Activated T-helper 2 cell treated with anti-CD3 and anti-CD28 coated beads, Interferon-gamma antibody, Interleukin-2, Interleukin-4, amounts not matched to agents 10 μg/mL and 5 μg/mL and 100 μg/mL, durations not matched to agents 14 hours and 24 hours and 36 hours (primary cell): ENCODE measurements at regions of chr12 and their contacts with region 1.

Region 1: GRCh38 chr12:6944381-6945186 is 762 bp downstream of the C12orf57 start:
- DNase-seq: peak; percentile 84
- H3K4me3 Mint-ChIP-seq: peak overlapping the region; percentile 84
- H3K27ac Mint-ChIP-seq: peak overlapping the region; percentile 99
- H3K4me1 Mint-ChIP-seq: peaks cover 50% of the 10 kb centered on the region
- H3K27me3 Mint-ChIP-seq: no peaks in the 10 kb centered on the region

Region 2: DNA sequence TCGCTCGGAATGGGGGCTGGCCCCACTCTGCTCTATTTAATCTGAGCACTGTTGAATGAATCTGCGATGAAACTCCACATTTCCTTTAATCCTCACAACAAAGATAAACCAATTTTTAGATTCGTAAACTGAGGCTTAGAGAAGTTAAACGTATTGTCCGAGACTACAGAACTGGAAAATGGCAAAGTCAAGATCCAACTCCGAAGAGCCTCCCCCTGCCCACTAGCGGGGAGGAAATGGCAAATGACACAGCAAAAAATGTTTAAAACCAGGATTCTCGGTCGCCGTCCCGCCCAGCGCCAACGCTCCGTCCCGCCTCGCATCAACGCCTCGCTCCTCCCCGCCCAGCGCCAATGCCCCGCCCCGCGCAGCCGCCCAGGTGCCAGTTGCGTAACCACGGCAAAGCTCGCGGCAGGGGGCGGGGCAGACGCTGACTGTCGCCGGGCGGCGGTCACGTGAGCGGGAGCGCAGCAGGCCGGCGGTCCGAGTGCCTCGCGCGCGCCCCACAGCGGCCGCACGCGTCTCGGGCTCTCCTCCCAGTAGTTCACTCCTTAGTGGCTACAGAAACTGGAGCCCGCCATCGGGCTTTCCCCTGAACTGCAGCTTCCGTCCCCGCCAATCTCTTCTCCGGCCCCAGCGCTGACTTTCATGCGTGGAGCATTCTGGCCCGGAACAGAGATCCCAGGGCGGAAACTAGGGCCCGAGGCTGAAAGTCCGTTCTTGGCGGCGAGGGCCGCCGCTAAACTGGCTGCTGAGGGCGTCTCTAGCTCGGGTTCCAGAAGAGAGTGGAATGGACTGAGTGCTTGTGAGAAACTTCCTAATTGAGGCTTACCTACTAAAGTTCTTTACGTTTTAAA is 53.6 kb before region 1 on chr12:
- intact Hi-C with region 1: loop called (anchors 1 kb)
- DNase-seq: peak; percentile 98
- H3K4me3 Mint-ChIP-seq: peak overlapping the region; percentile 80
- H3K27ac Mint-ChIP-seq: peak overlapping the region; percentile 92
- H3K4me1 Mint-ChIP-seq: peaks cover 13% of the 10 kb centered on the region
- H3K27me3 Mint-ChIP-seq: no peaks in the 10 kb centered on the region

Region 3: DNA sequence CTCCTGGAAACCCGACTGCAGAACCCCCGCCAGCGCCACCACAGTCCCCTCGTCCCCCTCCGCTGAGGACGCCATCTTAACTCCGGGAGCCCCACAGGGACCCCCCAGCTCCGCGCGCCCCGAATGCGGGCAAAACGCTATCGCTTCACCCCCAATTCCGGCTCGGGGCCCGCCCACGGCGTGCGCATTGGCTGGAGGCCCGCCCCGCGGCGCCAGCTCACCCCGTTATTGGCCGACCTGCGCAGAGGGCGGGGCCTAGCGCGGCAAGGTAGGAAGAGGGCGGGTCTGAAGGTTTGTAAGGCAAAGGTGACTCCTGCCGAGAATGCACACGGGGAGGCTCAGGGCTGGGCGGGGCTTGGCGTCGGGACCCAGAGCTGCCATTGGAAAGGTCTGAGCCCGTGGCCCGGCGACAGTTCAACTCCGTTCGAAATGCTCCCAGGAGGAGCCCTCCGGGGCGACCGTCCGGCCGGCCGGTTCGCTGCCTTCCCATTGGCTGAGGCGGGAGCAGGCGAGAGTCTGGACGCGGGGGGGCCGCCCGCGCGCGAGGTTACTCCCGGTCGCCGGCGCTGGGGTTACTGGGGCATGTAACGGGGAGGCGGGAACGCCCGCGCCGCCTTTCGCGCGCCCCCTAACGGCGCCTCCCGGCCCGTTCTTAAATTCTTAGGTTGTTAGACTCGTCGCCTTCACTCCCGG is 73.9 kb after region 1 on chr12 and contains the start of gene LPCAT3:
- intact Hi-C with region 1: loop called (anchors 5 kb)
- DNase-seq: peak; percentile 98
- H3K4me3 Mint-ChIP-seq: peak within 1 kb of the TSS; percentile 91
- H3K27ac Mint-ChIP-seq: peak within 1 kb of the TSS; percentile 84
- H3K4me1 Mint-ChIP-seq: peaks cover 24% of the 10 kb centered on the region
- H3K27me3 Mint-ChIP-seq: no peaks in the 10 kb centered on the region
- total RNA-seq, gene LPCAT3: 30.9 and 34.0 TPM in 2 replicates

Region 4: GRCh38 chr12:7108796-7109571 is 164.4 kb after region 1 on chr12 and contains the start of gene C1RL:
- intact Hi-C with region 1: loop called (anchors 5 kb)
- DNase-seq: peak; percentile 66
- H3K4me3 Mint-ChIP-seq: peak within 1 kb of the TSS; percentile 91
- H3K27ac Mint-ChIP-seq: peak within 1 kb of the TSS; percentile 89
- H3K4me1 Mint-ChIP-seq: peaks cover 39% of the 10 kb centered on the region
- H3K27me3 Mint-ChIP-seq: no peaks in the 10 kb centered on the region
- total RNA-seq, gene C1RL: 20.2 and 28.7 TPM in 2 replicates

Region 5: GRCh38 chr12:7995266-7995963 is 1050.8 kb after region 1 on chr12:
- intact Hi-C with region 1: loop called (anchors 10 kb)
- DNase-seq: peak; percentile 80
- H3K4me3 Mint-ChIP-seq: no peak overlapping the region
- H3K27ac Mint-ChIP-seq: no peak overlapping the region
- H3K4me1 Mint-ChIP-seq: peaks cover 17% of the 10 kb centered on the region
- H3K27me3 Mint-ChIP-seq: no peaks in the 10 kb centered on the region